ENCODE measurements at regions of chr12 and their contacts with region 1.

Region 1: DNA sequence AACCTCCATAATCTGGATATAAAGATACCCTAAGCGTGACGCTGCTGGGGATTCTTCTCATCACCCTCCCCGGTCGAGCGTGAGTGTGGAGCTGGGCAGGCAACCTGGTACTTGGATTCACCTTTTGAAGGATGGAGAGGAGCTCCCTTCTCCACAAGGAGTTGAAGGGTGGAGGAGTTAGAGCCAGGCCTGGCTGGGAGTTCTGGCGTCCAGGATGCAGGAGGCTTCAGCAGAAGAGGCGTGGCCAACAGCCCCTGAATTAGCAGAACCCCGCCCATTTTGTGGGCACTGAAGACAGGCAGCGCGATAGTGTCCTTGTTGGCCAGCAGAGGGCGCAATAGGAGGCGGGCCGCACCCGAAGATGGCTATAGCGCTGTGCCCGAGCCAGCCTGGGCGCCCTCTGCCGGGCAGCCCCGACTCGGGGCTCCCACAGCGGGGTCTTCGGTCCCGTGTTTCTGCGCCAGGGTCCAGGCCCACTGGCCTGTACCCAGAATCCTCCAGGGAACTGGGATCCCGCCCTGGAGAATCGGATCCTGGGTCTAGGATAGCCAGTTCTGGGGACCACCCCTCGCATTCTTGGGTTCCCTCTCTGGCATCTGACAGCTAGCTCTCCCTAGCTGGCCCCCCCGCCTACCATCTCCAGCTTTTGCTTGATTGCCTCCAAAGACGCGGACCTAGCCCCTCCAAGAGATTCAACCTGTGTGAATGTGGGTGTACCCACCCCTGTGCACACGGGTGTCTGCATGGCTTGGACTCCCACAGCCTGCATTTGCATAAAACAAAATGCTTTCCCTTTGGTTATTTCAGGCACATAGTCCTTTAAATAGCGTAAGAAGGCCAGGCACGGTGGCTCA is 26.0 kb upstream of the SMUG1 start:
- DNase-seq: peak; percentile 85
- ATAC-seq: peak; percentile 93
- H3K4me3 ChIP-seq: peak overlapping the region; percentile 15; the same call in 1 of the 2 replicates
- H3K27ac ChIP-seq: no peak overlapping the region
- H3K4me1 ChIP-seq: peaks cover 5% of the 10 kb centered on the region; the same call in 1 of the 2 replicates
- H3K27me3 ChIP-seq: peaks cover 36% of the 10 kb centered on the region
- CTCF ChIP-seq: peak; percentile 100; the same call in 1 of the 2 replicates
- POLR2A ChIP-seq: no peak
- RAD21 ChIP-seq: peak; percentile 60

Region 2: DNA sequence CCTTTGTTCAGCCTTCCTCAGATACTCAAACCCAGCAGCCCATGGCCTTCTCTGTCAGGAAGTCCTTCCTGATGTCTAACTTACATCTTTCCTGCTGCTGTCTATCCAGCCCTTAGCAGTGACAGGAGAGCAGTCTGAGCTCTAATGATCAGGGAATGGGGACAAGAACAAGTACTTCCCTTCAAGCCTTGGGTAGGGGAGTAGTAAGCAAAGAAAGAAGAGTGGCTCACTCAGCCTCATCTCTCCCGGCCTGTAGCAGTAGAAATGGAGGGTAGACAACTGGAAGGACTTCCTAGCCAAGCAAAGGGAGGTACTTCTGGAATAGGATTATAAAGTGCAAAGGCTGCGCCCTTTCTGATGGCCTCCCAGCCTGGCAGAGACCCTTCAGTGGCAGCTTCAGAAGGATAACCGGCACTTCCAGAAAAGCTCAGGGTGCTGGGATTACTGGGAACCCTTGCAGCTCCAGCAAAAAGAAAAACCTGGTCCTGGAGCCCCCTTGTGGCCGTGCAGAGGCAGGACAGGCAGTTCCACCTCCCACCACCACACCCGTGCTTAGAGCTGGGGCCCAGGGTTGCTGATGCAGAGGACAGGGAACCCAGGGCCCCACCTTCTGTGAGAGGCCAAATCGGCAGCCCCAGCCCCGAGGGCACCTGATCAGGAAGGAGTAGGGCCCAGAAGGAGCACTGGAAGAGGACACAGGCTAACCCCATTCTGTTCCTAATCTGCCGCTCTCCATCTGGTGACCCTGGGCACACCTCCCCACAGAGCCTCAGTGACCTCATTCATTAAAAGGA is 13.6 kb before region 1 on chr12:
- CTCF ChIA-PET with region 1: interaction called, 12 read pairs
- POLR2A ChIA-PET with region 1: no interaction called
- dilution Hi-C with region 1: no loop called
- in situ Hi-C with region 1: no loop called
- intact Hi-C with region 1: no loop called
- DNase-seq: peak; percentile 65
- ATAC-seq: peak; percentile 99
- H3K4me3 ChIP-seq: no peak overlapping the region
- H3K27ac ChIP-seq: no peak overlapping the region
- H3K4me1 ChIP-seq: no peaks in the 10 kb centered on the region; the same call in 1 of the 2 replicates
- H3K27me3 ChIP-seq: peaks cover 33% of the 10 kb centered on the region
- CTCF ChIP-seq: peak; percentile 99
- POLR2A ChIP-seq: no peak
- RAD21 ChIP-seq: peak; percentile 78

Region 3: DNA sequence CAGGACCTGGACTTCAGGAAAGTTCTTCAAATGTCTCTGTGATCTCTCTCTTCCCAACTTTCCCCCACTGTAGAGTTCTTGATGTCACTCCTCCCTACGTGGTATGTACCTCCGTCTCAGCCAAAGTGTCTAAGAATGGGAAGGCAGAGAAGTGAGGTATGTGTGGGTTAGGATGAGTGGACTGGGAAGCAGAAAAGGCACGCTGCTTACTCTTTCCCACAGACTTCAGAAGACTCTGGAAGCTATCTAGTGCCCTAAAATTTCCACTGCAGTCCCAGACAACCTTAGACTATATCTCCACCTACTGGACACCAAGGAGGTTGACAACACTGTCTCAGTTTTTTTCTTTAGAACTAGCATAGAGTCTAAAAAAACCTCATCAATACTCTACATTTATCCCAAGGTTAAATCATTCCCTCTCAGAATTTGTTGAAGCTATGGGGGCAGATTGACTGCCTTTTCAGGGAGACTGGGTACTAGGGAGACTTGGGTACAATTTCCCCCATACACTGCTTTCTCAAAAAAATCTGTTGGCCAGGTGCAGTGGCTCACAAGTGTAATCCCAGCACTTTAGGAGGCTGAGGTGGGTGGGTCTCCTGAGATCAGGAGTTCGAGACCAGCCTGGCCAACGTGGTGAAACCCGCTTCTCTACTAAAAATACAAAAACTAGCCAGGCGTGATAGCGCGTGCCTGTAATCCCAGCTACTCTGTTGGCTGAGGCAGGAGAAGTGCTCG is 224.9 kb after region 1 on chr12:
- CTCF ChIA-PET with region 1: no interaction called
- POLR2A ChIA-PET with region 1: no interaction called
- dilution Hi-C with region 1: no loop called
- in situ Hi-C with region 1: no loop called
- intact Hi-C with region 1: loop called (anchors 10 kb)
- DNase-seq: peak; percentile 86
- ATAC-seq: peak; percentile 98
- H3K4me3 ChIP-seq: no peak overlapping the region
- H3K27ac ChIP-seq: no peak overlapping the region
- H3K4me1 ChIP-seq: peaks cover 4% of the 10 kb centered on the region
- H3K27me3 ChIP-seq: peaks cover 10% of the 10 kb centered on the region
- CTCF ChIP-seq: peak; percentile 95
- POLR2A ChIP-seq: no peak
- RAD21 ChIP-seq: peak; percentile 96

Region 4: DNA sequence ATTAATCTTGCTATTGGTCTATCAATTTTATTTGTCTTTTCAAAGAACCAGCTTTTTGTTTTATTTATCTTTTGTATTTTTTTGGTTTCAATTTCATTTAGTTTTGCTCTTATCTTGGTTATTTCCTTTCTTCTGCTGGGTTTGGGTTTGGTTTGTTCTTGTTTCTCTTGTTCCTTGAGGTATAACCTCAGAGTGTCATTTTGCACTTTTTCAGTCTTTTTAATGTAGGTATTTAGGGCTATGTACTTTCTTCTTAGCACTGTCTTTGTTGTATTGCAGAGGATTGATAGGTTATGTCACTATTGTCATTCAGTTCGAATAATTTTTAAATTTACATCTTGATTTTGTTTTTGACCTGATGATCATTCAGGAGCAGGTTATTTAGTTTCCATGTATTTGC is 526.1 kb after region 1 on chr12:
- CTCF ChIA-PET with region 1: no interaction called
- POLR2A ChIA-PET with region 1: no interaction called
- dilution Hi-C with region 1: no loop called
- in situ Hi-C with region 1: no loop called
- intact Hi-C with region 1: no loop called
- DNase-seq: no peak
- ATAC-seq: no peak
- H3K4me3 ChIP-seq: no peak overlapping the region
- H3K27ac ChIP-seq: no peak overlapping the region
- H3K4me1 ChIP-seq: no peaks in the 10 kb centered on the region
- H3K27me3 ChIP-seq: no peaks in the 10 kb centered on the region
- CTCF ChIP-seq: no peak
- POLR2A ChIP-seq: no peak
- RAD21 ChIP-seq: no peak